ENCODE measurements at regions of chr11 and their contacts with region 1.

Region 1: GRCh38 chr11:10455637-10456487 is 798 bp downstream of the AMPD3 start:
- DNase-seq: peak; percentile 71
- H3K4me3 Mint-ChIP-seq: peak overlapping the region; percentile 88
- H3K27ac Mint-ChIP-seq: peak overlapping the region; percentile 84
- H3K4me1 Mint-ChIP-seq: peaks cover 74% of the 10 kb centered on the region
- H3K27me3 Mint-ChIP-seq: peaks cover 6% of the 10 kb centered on the region

Region 2: DNA sequence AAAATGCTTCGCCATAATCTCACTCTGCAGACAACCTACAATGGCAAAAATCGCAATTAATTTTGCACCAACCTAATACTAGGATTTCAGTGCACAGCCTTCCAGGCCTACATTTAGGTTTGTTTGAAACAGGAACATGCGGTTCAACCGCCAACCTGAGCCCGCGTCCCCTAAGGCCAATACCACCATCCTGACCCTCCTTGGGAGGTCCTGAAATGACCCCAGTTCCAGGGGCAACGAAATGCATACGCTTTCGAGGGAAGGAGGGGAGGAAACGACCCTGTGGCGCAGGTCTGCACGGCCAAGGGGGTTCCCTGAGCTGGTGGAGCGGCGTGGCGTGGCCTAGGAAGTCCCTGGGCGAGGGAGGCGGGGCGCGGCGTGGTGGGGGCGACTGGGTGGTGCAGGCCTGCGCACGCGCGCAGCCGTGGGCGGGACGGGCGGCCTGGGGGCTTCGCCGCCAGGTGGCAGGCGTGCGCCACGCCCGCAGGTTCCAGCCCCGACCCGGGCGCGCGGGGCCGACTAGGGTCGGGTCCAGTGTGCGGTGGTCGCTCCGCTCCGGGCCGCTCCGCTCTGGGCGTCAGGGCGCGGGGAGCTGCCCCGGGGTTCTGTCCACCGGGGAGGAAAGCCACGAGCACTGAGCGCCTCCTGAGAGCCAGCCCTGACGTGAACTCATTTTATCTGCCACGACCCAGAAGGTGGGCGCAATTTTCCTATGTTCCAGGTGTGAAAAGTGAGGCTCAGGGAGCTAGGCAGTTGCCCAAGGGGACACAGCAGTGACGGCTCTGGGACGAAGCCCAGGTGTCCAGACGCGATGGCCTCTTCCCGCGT is 697.8 kb before region 1 on chr11:
- intact Hi-C with region 1: loop called (anchors 5 kb)
- DNase-seq: peak; percentile 87
- H3K4me3 Mint-ChIP-seq: peak overlapping the region; percentile 73
- H3K27ac Mint-ChIP-seq: peak overlapping the region; percentile 89
- H3K4me1 Mint-ChIP-seq: peaks cover 40% of the 10 kb centered on the region
- H3K27me3 Mint-ChIP-seq: no peaks in the 10 kb centered on the region

Region 3: GRCh38 chr11:10004526-10005113 is 451.2 kb before region 1 on chr11:
- intact Hi-C with region 1: no loop called
- DNase-seq: no peak
- H3K4me3 Mint-ChIP-seq: no peak overlapping the region
- H3K27ac Mint-ChIP-seq: no peak overlapping the region
- H3K4me1 Mint-ChIP-seq: no peaks in the 10 kb centered on the region
- H3K27me3 Mint-ChIP-seq: no peaks in the 10 kb centered on the region

Region 4: GRCh38 chr11:10413268-10413667 is 42.6 kb before region 1 on chr11:
- intact Hi-C with region 1: loop called (anchors 2 kb)
- DNase-seq: no peak
- H3K4me3 Mint-ChIP-seq: no peak overlapping the region
- H3K27ac Mint-ChIP-seq: no peak overlapping the region
- H3K4me1 Mint-ChIP-seq: peaks cover 24% of the 10 kb centered on the region
- H3K27me3 Mint-ChIP-seq: peaks cover 17% of the 10 kb centered on the region

Region 5: GRCh38 chr11:10526974-10527918 is 71.4 kb after region 1 on chr11:
- intact Hi-C with region 1: loop called (anchors 5 kb)
- DNase-seq: no peak
- H3K4me3 Mint-ChIP-seq: no peak overlapping the region
- H3K27ac Mint-ChIP-seq: peak overlapping the region; percentile 35
- H3K4me1 Mint-ChIP-seq: peaks cover 16% of the 10 kb centered on the region
- H3K27me3 Mint-ChIP-seq: no peaks in the 10 kb centered on the region

Region 6: DNA sequence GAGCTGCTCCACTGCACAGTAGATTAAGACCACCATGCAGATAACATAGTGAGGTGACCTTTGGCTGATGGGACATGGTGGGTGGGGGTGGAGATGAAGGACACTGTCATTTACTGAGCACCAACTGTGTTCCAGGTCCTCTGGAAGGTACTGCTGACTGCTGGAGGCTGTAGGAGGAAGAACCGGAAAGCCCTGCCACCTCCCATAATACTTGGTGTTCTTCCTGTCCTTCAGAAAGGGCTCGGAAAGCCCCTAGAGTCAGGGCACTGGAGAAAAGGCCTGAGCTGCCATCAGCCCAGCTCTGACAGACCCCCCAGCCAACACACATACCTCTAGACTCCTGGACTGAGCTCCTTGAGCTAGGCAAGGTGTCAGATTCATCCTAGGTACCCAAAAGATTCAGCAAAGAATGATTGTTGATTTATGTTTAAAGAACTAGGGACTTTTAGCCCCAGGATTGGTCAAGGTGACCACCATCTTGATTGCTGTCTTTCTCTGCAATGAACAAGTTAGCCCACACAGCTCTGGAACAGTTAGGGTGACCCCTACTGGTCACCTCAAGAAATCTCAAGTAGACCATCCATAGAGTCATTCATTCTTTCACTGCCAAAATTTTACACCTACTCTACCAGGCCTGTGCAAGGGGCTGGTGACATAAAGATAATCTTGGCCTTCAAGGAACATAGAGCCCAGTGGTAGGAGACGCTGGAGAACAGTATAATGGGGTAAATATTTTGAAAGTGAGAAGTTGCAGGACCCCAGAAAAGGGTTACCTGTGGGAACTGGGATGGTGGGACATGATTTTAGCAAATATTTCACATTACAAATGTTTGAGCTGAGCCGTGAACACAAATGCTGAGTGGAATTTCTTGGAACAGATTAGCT is 198.3 kb after region 1 on chr11:
- intact Hi-C with region 1: loop called (anchors 2 kb)
- DNase-seq: peak; percentile 14
- H3K4me3 Mint-ChIP-seq: no peak overlapping the region
- H3K27ac Mint-ChIP-seq: no peak overlapping the region
- H3K4me1 Mint-ChIP-seq: peaks cover 24% of the 10 kb centered on the region
- H3K27me3 Mint-ChIP-seq: no peaks in the 10 kb centered on the region

Region 7: DNA sequence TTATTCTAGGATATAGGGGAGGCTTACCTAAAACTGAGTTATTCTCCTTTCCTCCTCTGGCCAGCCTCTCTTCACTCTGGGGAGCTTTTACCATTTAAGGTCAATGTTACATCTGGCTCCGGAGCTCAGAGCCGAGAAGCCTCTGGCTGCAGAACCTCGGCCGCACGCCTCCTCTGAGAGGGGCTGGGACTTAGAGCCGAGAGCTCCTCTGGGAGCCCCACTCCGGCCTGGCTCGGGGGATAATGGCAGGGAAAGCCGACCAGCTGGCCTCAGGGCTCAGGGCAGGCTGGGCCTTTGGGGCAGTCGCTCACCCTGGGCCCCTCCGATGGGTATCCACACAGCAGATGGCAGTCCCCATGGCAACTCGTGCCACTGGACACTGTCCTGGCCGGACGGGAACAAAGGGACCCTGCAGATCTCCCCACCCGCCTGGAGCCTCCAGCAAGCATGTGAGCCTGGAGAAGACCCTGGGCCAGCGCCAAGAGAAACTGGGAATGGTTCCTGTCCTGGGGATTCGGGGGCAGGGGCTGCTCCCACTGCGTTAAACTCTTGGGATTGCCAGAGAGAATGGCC is 237.7 kb after region 1 on chr11 and contains the start of gene IRAG1:
- intact Hi-C with region 1: no loop called
- DNase-seq: no peak
- H3K4me3 Mint-ChIP-seq: no peak within 1 kb of the TSS
- H3K27ac Mint-ChIP-seq: no peak within 1 kb of the TSS
- H3K4me1 Mint-ChIP-seq: no peaks in the 10 kb centered on the region
- H3K27me3 Mint-ChIP-seq: peaks cover 18% of the 10 kb centered on the region
- total RNA-seq, gene IRAG1: not detected in 2 replicates

Region 8: GRCh38 chr11:10762185-10762584 is 306.3 kb after region 1 on chr11:
- intact Hi-C with region 1: no loop called
- DNase-seq: no peak
- H3K4me3 Mint-ChIP-seq: no peak overlapping the region
- H3K27ac Mint-ChIP-seq: no peak overlapping the region
- H3K4me1 Mint-ChIP-seq: peaks cover 3% of the 10 kb centered on the region
- H3K27me3 Mint-ChIP-seq: no peaks in the 10 kb centered on the region

Region 9: DNA sequence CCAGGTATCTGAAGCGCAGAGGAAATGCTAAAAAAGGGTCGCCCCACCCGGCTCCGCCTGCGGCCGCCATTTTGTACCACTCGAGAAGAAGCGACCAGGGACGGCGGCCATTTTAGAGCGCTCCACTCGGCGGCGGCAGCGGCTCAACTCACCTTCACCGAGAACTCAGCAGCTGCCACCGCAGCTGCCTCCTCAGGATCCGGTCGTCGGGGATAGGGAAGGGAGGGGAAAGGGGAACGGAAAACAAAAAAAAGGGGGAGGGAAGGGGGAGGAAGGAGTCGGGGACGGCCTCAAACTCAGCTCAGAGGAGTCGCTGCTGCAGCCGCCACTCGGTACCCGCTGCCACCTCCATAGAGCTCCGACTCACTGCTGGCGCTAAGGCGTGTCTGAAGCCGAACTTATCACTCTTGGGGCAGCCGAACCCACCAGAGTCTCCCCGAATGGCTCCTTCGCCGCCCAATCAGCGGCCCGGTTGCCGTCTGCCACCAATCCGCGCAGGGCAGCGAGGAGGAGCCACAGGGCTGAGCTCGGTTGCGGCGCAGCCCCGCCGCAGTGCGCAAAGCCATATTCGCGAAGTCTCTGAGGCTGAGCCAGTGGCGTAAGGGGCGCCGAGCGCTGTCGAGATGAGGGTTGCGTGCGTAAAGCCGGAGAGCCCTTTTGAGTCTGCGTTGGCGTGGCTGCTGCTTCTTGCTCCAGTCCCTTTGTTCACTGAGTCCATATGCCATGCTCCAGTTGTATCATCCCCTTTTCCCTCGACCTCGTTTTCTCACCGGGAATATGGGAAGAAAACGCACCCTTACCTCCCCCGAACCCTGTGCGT is 352.9 kb after region 1 on chr11 and contains the start of gene EIF4G2:
- intact Hi-C with region 1: loop called (anchors 5 kb)
- DNase-seq: peak; percentile 98
- H3K4me3 Mint-ChIP-seq: peak within 1 kb of the TSS; percentile 94
- H3K27ac Mint-ChIP-seq: peak within 1 kb of the TSS; percentile 98
- H3K4me1 Mint-ChIP-seq: peaks cover 33% of the 10 kb centered on the region
- H3K27me3 Mint-ChIP-seq: peaks cover 2% of the 10 kb centered on the region
- total RNA-seq, gene EIF4G2: 1,057 and 1,120 TPM in 2 replicates

Measured in activated T-helper 2 cell treated with anti-CD3 and anti-CD28 coated beads, Interferon-gamma antibody, Interleukin-2, Interleukin-4, amounts not matched to agents 10 μg/mL and 5 μg/mL and 100 μg/mL, durations not matched to agents 14 hours and 24 hours and 36 hours (primary cell).